Heart left ventricle (tissue), 16 donors: ENCODE measurements at regions of chr12 and their contacts with region 1.

Region 1: DNA sequence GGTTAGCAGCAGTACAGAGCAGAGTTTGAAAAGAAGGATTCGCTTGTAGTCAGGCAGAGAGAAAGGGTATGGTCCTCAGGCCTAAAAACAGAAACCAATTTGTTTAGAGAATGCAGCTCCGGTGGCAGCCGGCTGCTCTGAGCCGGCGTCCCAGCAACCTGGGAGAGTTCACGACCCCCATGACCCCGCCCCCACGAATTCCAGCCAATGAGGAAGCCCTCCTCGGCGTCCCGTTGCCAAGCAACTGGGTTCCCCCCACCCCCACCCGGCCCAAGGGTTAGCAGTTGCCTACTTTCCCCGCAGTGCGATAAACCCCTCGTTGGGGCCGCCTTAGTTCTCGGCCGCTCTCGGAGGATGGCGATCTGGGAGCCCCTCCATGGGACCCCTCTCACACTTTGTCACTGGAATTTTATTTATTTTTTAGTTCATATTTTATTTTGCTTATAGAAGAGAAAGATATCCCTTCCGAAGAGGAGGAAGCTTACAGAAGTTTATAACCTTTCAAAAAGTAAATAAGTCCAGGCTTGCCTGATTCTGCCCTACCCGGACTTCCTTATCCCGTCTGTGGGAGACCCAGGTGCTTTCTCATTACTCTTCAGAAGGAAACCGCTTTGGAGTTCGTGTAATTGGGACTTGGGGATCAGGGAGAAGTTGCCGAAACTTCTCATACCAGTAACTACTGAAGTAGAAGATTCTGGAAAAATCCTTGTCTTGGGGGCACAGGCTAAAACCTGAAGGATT is at the start of gene CCDC60:
- DNase-seq: peak in 1 of 5 donors; percentile 27
- ATAC-seq: no peak
- H3K4me3 ChIP-seq: no peak within 1 kb of the TSS
- H3K27ac ChIP-seq: no peak within 1 kb of the TSS
- H3K4me1 ChIP-seq: no peaks in the 10 kb centered on the region
- H3K27me3 ChIP-seq: peaks cover 0 to 11% (median 0%) of the 10 kb centered on the region in 9 donors
- CTCF ChIP-seq: no peak
- POLR2A ChIP-seq: no peak
- total RNA-seq, gene CCDC60: not detected

Region 2: GRCh38 chr12:119176267-119176849 is 158.2 kb before region 1 on chr12:
- intact Hi-C with region 1: no loop called
- DNase-seq: peak; percentile 89 to 97 (median 92)
- ATAC-seq: peak; percentile 59 to 71 (median 68)
- H3K4me3 ChIP-seq: peak overlapping the region; percentile 11 to 71 (median 49)
- H3K27ac ChIP-seq: peak overlapping the region; percentile 45 to 99 (median 92)
- H3K4me1 ChIP-seq: peaks cover 0 to 35% (median 13%) of the 10 kb centered on the region in 12 donors
- H3K27me3 ChIP-seq: no peaks in the 10 kb centered on the region
- CTCF ChIP-seq: no peak
- POLR2A ChIP-seq: peak in 1 of 2 donors; percentile 72

Region 3: DNA sequence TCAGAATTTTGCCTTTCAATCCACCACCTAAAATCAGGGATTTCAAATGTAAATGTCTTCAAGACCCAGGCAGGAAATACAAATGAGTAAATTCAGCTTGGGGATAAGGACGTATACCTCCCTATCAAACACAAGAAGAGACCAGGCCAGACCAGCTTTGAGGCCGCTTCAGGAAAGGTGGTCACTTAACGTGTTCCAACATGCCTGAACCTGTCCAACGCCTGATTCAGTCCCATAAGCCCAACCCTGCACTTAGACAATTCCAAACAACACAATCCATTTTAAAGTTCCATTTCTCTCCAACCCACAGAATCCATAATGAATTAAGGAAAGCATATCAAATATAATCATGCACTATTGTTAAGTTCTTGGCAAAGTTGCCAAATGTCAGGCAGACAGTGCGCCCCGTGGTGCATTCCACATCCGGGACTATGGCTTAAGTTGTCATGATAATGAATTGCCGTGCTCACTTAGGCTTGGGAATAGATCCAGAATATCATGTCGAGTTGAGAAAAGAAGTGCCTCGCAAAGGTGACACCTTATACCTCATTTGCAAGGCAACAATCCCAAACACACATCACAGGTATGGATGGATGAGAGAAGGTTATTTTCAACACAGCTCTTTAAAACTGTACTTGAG is 35.4 kb after region 1 on chr12:
- intact Hi-C with region 1: no loop called
- DNase-seq: no peak
- ATAC-seq: no peak
- H3K4me3 ChIP-seq: no peak overlapping the region
- H3K27ac ChIP-seq: peak overlapping the region in 1 of 12 donors; percentile 66
- H3K4me1 ChIP-seq: peaks cover 0 to 32% (median 11%) of the 10 kb centered on the region in 12 donors
- H3K27me3 ChIP-seq: no peaks in the 10 kb centered on the region
- CTCF ChIP-seq: no peak
- POLR2A ChIP-seq: no peak

Region 4: DNA sequence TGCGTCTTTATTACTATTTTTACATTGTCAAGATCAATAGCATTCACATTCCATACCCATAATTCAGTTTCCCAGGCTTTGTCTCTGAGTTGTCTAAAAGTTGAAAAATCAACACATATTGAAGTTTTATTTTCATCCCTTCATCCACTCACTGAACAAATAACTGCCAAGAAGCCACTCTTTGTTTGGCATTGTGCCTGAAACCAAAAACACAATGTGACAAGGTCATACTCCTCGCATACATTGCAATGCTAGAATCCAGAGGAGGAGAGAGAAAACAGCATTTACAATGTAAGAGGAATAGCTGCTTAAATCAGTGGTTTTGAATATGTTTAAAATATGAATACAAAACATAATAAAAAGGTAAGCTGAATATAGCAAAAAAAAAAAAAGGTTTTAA is 71.7 kb after region 1 on chr12:
- intact Hi-C with region 1: loop called in 6 of 10 experiments (anchors 2 to 10 kb)
- DNase-seq: no peak
- ATAC-seq: no peak
- H3K4me3 ChIP-seq: no peak overlapping the region
- H3K27ac ChIP-seq: peak overlapping the region in 1 of 12 donors; percentile 38
- H3K4me1 ChIP-seq: peaks cover 0 to 9% (median 0%) of the 10 kb centered on the region in 12 donors
- H3K27me3 ChIP-seq: no peaks in the 10 kb centered on the region
- CTCF ChIP-seq: no peak
- POLR2A ChIP-seq: no peak

Region 5: GRCh38 chr12:119505001-119505400 is 170.4 kb after region 1 on chr12:
- intact Hi-C with region 1: no loop called
- DNase-seq: no peak
- ATAC-seq: no peak
- H3K4me3 ChIP-seq: no peak overlapping the region
- H3K27ac ChIP-seq: no peak overlapping the region
- H3K4me1 ChIP-seq: no peaks in the 10 kb centered on the region
- H3K27me3 ChIP-seq: peaks cover 0 to 14% (median 0%) of the 10 kb centered on the region in 9 donors
- CTCF ChIP-seq: no peak
- POLR2A ChIP-seq: no peak

Region 6: DNA sequence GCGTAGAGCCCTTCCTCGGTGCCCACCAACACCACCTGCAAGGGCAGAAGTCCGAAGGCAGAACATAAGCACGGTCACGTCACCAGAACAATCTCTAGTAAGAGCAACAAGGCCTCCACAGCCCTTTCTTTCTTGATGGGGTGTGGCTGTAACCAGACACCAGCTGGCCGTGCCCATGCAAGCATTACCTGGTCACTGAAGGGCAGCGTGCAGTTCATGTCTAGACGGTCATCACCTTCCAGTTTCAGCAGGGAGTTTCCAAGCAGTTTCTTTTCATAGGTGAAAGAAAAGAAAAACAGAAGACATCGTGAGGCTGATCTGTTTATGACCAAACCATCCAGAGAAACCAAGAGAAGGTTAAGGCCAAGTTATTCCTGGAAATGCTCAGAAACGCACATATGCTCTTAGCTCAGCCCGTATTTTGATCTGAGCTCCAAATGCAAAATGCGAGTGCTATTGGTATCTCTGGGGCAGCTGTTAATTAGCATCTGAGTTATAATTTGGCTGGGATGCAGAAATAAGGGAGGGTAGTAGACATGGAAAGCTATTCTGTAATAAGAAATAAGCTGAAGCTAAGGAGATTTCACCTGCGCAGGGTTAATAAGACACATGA is 375.9 kb after region 1 on chr12:
- intact Hi-C with region 1: no loop called
- DNase-seq: no peak
- ATAC-seq: no peak
- H3K4me3 ChIP-seq: no peak overlapping the region
- H3K27ac ChIP-seq: no peak overlapping the region
- H3K4me1 ChIP-seq: no peaks in the 10 kb centered on the region
- H3K27me3 ChIP-seq: no peaks in the 10 kb centered on the region
- CTCF ChIP-seq: no peak
- POLR2A ChIP-seq: no peak